Activated CD4-positive, alpha-beta T cell treated with anti-CD3 and anti-CD28 coated beads, Interleukin-2, amount 10 ng/mL, durations not matched to agents 24 days and 14 days (primary cell): ENCODE measurements at regions of chr19 and their contacts with region 1.

Region 1: DNA sequence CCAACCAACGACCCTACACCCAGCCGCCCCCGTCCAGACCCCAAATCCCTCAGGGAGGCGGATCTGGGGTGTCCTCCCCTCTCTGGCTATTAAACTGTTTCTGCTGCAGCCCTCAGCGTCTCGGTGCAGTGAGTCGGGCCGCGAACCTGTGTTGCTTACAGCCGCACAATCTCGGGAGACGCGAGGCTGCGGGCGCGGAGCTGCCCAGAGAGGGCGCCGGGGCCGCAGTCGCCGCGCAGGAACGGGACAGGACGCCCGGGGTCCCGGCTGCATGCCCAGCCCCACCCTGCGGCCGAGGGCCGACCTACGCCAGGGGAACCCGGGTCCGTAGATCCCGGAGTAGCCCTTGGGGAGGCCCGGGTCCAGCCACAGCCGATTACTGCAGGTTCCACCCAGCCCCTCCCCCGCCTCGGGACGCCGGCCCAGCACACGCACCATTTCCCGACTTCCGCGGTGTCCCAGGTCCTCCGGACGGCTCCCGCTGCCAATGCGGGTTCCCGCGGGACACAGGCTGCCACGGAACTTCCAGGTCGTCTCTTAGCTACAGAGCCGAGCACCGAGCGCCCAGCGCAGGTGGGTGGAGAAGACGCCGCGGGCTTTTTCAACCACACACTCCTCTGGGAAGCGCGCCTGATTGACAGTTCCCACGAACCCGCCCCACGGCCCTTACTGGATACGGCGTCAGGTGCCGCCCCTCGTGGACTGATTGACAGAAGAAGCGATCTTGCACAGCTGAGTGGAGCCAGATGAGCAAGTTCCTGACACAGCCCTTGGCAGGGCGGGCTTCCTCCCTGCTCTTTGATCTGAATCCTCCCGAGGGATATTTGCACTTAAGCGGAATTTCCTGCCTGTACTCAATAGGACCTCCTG is at the start of gene ZNF799:
- DNase-seq: peak; percentile 95
- H3K4me3 Mint-ChIP-seq: peak within 1 kb of the TSS; percentile 93
- H3K27ac Mint-ChIP-seq: peak within 1 kb of the TSS; percentile 83
- H3K4me1 Mint-ChIP-seq: peaks cover 14% of the 10 kb centered on the region
- H3K27me3 Mint-ChIP-seq: no peaks in the 10 kb centered on the region
- total RNA-seq, gene ZNF799: 3.9 and 4.0 TPM in 2 replicates

Region 2: DNA sequence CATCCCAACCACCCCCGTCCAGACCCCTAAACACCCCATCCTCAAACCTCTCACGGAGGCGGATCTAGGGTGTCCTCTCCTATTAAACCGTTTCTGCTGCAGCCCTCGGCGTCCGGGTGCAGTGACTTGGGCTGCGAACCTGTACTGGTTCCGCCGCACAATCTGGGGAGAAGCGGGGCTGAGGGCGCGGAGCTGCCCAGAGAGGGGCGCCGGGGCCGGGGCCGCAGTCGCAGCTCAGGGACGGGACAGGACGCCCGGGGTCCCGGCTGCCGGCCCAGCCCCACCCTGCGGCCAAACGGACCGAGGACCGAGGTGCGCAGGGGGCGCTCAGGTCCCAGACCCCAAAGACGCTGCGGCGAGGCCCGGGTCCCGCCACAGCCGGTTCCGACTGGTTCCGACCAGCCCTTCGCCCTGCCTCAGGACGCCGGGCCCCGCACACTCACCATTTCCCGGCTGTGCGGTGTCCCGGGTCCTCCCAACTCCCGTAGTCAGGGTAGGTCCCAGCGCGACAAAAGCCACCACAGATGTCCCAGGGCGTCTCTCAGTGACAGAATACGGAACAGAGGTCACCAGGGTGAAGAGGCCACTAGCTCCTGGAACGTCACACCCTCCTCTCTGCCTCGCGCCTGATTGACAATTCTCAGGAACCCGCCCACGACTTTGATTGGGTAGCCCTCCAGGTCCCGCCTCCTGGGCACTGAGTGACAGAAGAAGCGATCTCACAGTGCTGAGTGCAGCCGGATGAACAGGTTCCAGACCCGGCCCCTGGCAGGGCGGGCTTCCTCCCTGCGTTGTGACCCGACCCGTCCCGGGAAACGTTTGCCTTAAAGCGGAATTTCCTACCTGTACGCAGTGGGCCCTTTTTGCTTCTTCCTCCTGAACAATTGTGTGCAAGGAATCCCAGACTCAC is 106.4 kb before region 1 on chr19 and contains the start of gene ZNF44:
- intact Hi-C with region 1: loop called (anchors 2 kb)
- DNase-seq: peak; percentile 99
- H3K4me3 Mint-ChIP-seq: peak within 1 kb of the TSS; percentile 98
- H3K27ac Mint-ChIP-seq: peak within 1 kb of the TSS; percentile 98
- H3K4me1 Mint-ChIP-seq: peaks cover 27% of the 10 kb centered on the region
- H3K27me3 Mint-ChIP-seq: no peaks in the 10 kb centered on the region
- total RNA-seq, gene ZNF44: 8.4 TPM in 2 replicates

Region 3: GRCh38 chr19:12440541-12441316 is 39.9 kb after region 1 on chr19 and contains the start of gene ZNF443:
- intact Hi-C with region 1: loop called (anchors 2 kb)
- DNase-seq: peak; percentile 100
- H3K4me3 Mint-ChIP-seq: peak within 1 kb of the TSS; percentile 98
- H3K27ac Mint-ChIP-seq: peak within 1 kb of the TSS; percentile 92
- H3K4me1 Mint-ChIP-seq: peaks cover 11% of the 10 kb centered on the region
- H3K27me3 Mint-ChIP-seq: no peaks in the 10 kb centered on the region
- total RNA-seq, gene ZNF443: 4.8 and 5.7 TPM in 2 replicates

Region 4: GRCh38 chr19:12484371-12485051 is 83.6 kb after region 1 on chr19 and contains the start of gene ZNF709:
- intact Hi-C with region 1: loop called (anchors 5 kb)
- DNase-seq: peak; percentile 96
- H3K4me3 Mint-ChIP-seq: peak within 1 kb of the TSS; percentile 93
- H3K27ac Mint-ChIP-seq: peak within 1 kb of the TSS; percentile 26
- H3K4me1 Mint-ChIP-seq: peaks cover 22% of the 10 kb centered on the region
- H3K27me3 Mint-ChIP-seq: no peaks in the 10 kb centered on the region
- total RNA-seq, gene ZNF709: 1.3 and 1.5 TPM in 2 replicates

Region 5: GRCh38 chr19:12495002-12495802 is 94.3 kb after region 1 on chr19:
- intact Hi-C with region 1: loop called (anchors 5 kb)
- DNase-seq: peak; percentile 95
- H3K4me3 Mint-ChIP-seq: peak overlapping the region; percentile 83
- H3K27ac Mint-ChIP-seq: peak overlapping the region; percentile 79
- H3K4me1 Mint-ChIP-seq: peaks cover 11% of the 10 kb centered on the region
- H3K27me3 Mint-ChIP-seq: no peaks in the 10 kb centered on the region